ENCODE measurements at regions of chr15 and their contacts with region 1.

Region 1: GRCh38 chr15:52256366-52256765 is 39.2 kb downstream of the MYO5C start:
- DNase-seq: peak in 3 of 4 donors; percentile 58 to 79 (median 68)
- ATAC-seq: peak; percentile 71
- H3K4me3 ChIP-seq: no peak overlapping the region
- H3K27ac ChIP-seq: no peak overlapping the region
- H3K4me1 ChIP-seq: peaks cover 3 to 37% of the 10 kb centered on the region in 2 donors
- H3K27me3 ChIP-seq: no peaks in the 10 kb centered on the region
- CTCF ChIP-seq: peak; percentile 61 to 66

Region 2: GRCh38 chr15:52071546-52071945 is 184.8 kb before region 1 on chr15:
- intact Hi-C with region 1: no loop called
- DNase-seq: peak in 2 of 4 donors; percentile 44 to 59
- ATAC-seq: peak; percentile 93
- H3K4me3 ChIP-seq: no peak overlapping the region
- H3K27ac ChIP-seq: no peak overlapping the region
- H3K4me1 ChIP-seq: no peaks in the 10 kb centered on the region
- H3K27me3 ChIP-seq: no peaks in the 10 kb centered on the region
- CTCF ChIP-seq: no peak

Region 3: GRCh38 chr15:52370010-52370409 is 113.6 kb after region 1 on chr15:
- intact Hi-C with region 1: no loop called
- DNase-seq: peak in 1 of 4 donors; percentile 50
- ATAC-seq: peak; percentile 27
- H3K4me3 ChIP-seq: no peak overlapping the region
- H3K27ac ChIP-seq: no peak overlapping the region
- H3K4me1 ChIP-seq: no peaks in the 10 kb centered on the region
- H3K27me3 ChIP-seq: no peaks in the 10 kb centered on the region
- CTCF ChIP-seq: no peak

Region 4: DNA sequence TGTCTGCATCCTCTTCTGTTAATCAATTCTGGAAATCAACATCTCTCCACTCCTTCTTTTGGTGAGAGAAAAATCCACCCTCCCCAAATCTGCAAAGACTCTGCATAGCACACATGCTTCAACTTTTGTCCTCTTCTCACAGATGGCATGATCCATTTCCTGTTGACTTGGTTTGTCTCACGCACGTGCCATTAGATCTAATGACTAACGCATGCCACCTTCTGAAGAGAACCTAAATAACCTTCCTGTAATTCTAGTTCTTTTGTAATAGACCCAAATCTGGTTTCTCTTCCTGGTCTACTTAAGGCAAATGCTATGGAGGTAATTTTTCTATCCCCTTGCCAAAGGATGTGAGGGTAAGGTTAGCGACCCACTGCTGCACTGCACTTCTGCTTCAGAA is 473.8 kb after region 1 on chr15:
- intact Hi-C with region 1: loop called in 1 of 2 experiments (anchors 5 kb)
- DNase-seq: peak in 1 of 4 donors; percentile 10
- ATAC-seq: peak; percentile 25
- H3K4me3 ChIP-seq: no peak overlapping the region
- H3K27ac ChIP-seq: no peak overlapping the region
- H3K4me1 ChIP-seq: peaks cover 0 to 19% of the 10 kb centered on the region in 2 donors
- H3K27me3 ChIP-seq: no peaks in the 10 kb centered on the region
- CTCF ChIP-seq: no peak